ENCODE measurements at regions of chr3 and their contacts with region 1.

Region 1: GRCh38 chr3:154334973-154335420 is 10.7 kb upstream of the DHX36 start:
- DNase-seq: no peak
- H3K4me3 ChIP-seq: no peak overlapping the region
- H3K27ac ChIP-seq: no peak overlapping the region
- H3K4me1 ChIP-seq: no peaks in the 10 kb centered on the region
- H3K27me3 ChIP-seq: no peaks in the 10 kb centered on the region
- CTCF ChIP-seq: peak; percentile 39 to 69 (median 62)
- POLR2A ChIP-seq: no peak

Region 2: GRCh38 chr3:154285221-154285620 is 49.8 kb before region 1 on chr3:
- intact Hi-C with region 1: no loop called
- DNase-seq: no peak
- H3K4me3 ChIP-seq: no peak overlapping the region
- H3K27ac ChIP-seq: no peak overlapping the region
- H3K4me1 ChIP-seq: peaks cover 3% of the 10 kb centered on the region
- H3K27me3 ChIP-seq: no peaks in the 10 kb centered on the region
- CTCF ChIP-seq: no peak
- POLR2A ChIP-seq: no peak

Region 3: DNA sequence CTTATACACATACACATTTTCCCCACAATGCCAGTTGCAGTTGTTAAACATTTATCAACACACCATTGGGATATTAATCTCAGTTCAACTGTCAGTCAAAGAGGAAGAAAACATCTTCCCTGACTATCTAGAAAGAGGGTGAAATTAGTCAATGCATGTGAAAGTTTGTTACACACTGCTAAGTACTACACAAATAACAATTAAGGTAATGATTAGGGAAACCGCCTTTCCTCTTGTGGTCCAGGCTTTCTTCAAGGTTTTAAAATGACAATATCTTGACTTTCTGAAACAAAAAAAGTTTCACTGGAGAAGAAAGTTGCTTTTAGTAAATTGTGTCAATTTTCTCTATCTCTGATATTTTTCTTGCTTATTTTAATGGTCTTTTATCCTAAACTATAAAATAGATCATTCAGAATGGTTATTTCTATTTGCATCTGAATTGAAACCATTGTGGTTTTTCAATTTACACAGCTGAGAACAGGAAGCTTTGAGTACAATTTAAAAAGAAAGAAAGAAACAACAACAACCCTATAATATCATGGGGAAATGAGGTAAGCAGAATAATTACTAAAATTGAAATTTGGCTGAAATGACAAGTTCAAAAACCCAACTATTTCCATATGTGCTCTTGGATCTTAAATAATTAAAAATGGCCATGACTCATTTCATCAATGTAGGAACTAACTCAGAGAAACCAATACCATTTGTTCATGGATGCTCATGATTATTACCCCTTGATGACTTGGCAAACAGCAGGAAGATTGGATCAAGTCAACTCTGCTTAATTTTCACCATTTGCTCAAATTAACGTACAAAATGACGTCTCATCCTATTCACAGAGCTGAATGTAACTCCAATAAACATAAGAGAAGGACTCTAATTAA is 63.3 kb after region 1 on chr3:
- intact Hi-C with region 1: no loop called
- DNase-seq: no peak
- H3K4me3 ChIP-seq: no peak overlapping the region
- H3K27ac ChIP-seq: no peak overlapping the region
- H3K4me1 ChIP-seq: no peaks in the 10 kb centered on the region
- H3K27me3 ChIP-seq: no peaks in the 10 kb centered on the region
- CTCF ChIP-seq: no peak
- POLR2A ChIP-seq: no peak

Region 4: GRCh38 chr3:154766765-154767503 is 431.9 kb after region 1 on chr3:
- intact Hi-C with region 1: loop called (anchors 10 kb)
- DNase-seq: no peak
- H3K4me3 ChIP-seq: no peak overlapping the region
- H3K27ac ChIP-seq: no peak overlapping the region
- H3K4me1 ChIP-seq: no peaks in the 10 kb centered on the region
- H3K27me3 ChIP-seq: no peaks in the 10 kb centered on the region
- CTCF ChIP-seq: no peak
- POLR2A ChIP-seq: no peak

Region 5: GRCh38 chr3:154872074-154872473 is 537.1 kb after region 1 on chr3:
- intact Hi-C with region 1: no loop called
- DNase-seq: no peak
- H3K4me3 ChIP-seq: no peak overlapping the region
- H3K27ac ChIP-seq: no peak overlapping the region
- H3K4me1 ChIP-seq: no peaks in the 10 kb centered on the region
- H3K27me3 ChIP-seq: no peaks in the 10 kb centered on the region
- CTCF ChIP-seq: no peak
- POLR2A ChIP-seq: no peak

Region 6: GRCh38 chr3:155323063-155323666 is 988.2 kb after region 1 on chr3:
- intact Hi-C with region 1: loop called (anchors 10 kb)
- DNase-seq: peak; percentile 47
- H3K4me3 ChIP-seq: no peak overlapping the region
- H3K27ac ChIP-seq: no peak overlapping the region
- H3K4me1 ChIP-seq: no peaks in the 10 kb centered on the region
- H3K27me3 ChIP-seq: no peaks in the 10 kb centered on the region
- CTCF ChIP-seq: peak; percentile 36 to 78 (median 67)
- POLR2A ChIP-seq: no peak

Region 7: DNA sequence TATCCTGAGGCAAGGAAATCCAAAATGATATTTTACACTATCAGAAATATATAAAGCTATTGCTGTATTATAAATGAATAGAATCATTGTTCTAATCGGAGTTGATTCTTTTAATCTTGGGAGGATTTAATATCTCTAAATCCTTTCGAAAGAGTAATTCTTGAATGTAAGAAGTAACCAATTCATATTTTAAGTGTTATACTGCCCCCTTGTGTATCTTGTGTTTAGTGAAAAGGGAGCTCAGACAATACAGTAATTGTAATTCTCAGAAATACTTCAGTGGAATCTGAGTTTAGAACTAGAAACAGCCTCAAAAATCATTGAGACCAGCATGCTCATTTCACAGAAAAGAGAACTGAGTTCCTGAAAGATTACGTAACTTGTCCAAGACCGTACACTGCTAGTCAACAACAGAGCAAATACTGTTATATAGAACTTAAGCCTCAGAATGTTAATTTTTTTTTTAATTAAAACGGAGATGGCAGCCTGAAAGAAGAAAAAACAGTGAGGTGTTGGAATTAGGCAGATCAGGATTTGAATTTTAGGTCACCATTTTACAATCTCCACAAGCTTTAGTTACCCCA is 1367.0 kb after region 1 on chr3:
- intact Hi-C with region 1: loop called (anchors 10 kb)
- DNase-seq: peak; percentile 8
- H3K4me3 ChIP-seq: no peak overlapping the region
- H3K27ac ChIP-seq: no peak overlapping the region
- H3K4me1 ChIP-seq: no peaks in the 10 kb centered on the region
- H3K27me3 ChIP-seq: no peaks in the 10 kb centered on the region
- CTCF ChIP-seq: peak in 3 of 4 experiments; percentile 77 to 81 (median 79)
- POLR2A ChIP-seq: no peak